MCF 10A (cell line): ENCODE measurements at regions of chr6 and their contacts with region 1.

Region 1: GRCh38 chr6:56637640-56638039 is 5.0 kb downstream of the DST start:
- DNase-seq: peak; percentile 77
- H3K4me3 Mint-ChIP-seq: peak overlapping the region; percentile 88
- H3K27ac Mint-ChIP-seq: peak overlapping the region; percentile 97
- H3K4me1 Mint-ChIP-seq: peaks cover 35% of the 10 kb centered on the region
- H3K27me3 Mint-ChIP-seq: no peaks in the 10 kb centered on the region
- CTCF ChIP-seq: peak; percentile 48

Region 2: DNA sequence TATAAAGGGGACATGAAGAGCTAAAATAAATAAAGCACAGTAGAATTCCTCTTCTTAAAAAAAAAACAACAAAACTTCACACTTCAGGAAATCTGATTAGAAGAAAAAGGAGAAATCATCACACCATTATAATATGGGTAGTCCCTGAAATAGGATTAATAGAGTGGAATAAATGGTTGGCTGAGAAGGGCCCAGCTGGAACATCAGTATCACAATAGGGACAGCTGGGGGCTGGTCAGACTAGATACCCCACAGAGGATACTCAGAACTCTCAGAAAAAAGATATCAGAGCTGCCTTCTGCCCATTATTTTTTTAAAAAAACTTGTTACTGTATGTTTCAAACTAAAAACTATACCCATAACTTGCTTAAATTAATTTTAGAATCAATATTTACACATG is 70.1 kb before region 1 on chr6:
- CTCF ChIA-PET with region 1: no interaction called
- POLR2A ChIA-PET with region 1: no interaction called
- intact Hi-C with region 1: no loop called
- DNase-seq: no peak
- H3K4me3 Mint-ChIP-seq: no peak overlapping the region
- H3K27ac Mint-ChIP-seq: no peak overlapping the region
- H3K4me1 Mint-ChIP-seq: no peaks in the 10 kb centered on the region
- H3K27me3 Mint-ChIP-seq: no peaks in the 10 kb centered on the region
- CTCF ChIP-seq: no peak

Region 3: GRCh38 chr6:56618050-56618449 is 19.6 kb before region 1 on chr6:
- CTCF ChIA-PET with region 1: interaction called, 4 read pairs
- POLR2A ChIA-PET with region 1: interaction called, 1,548 read pairs
- intact Hi-C with region 1: no loop called
- DNase-seq: no peak
- H3K4me3 Mint-ChIP-seq: no peak overlapping the region
- H3K27ac Mint-ChIP-seq: no peak overlapping the region
- H3K4me1 Mint-ChIP-seq: no peaks in the 10 kb centered on the region
- H3K27me3 Mint-ChIP-seq: no peaks in the 10 kb centered on the region
- CTCF ChIP-seq: peak; percentile 14

Region 4: DNA sequence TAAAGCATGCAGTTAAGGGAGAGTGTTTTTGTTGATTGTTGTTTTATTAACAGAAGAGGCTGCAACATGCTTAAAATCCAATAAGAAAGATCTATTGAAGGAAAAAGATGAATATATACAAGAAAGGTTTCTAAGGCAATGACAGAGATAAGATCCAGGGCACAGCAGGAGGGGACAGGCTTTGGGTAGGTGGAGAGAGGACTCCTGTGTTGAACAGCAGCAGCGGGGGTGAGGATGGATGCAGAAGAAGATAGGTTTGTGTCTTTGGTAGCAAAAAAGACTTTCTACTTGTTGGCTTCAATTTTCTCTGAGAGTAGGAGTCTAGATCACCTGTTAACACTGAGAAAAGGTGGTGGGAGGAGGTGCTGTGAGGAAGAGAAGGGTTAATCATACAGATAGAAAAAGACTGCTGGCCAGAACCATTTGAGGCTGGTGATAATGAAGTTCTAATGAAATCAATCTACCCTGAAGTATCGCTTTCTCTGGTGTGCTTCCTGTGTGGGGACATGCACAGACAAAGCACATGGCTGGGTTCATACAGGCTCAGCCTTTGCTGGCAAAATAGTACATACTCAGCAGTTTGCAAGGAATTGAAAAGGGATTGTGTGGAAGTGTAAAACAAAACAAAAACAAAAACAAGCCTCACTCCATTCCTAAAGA is 22.2 kb after region 1 on chr6:
- CTCF ChIA-PET with region 1: interaction called, 15 read pairs
- POLR2A ChIA-PET with region 1: interaction called, 1,548 read pairs
- intact Hi-C with region 1: loop called (anchors 2 kb)
- DNase-seq: peak; percentile 42
- H3K4me3 Mint-ChIP-seq: peak overlapping the region; percentile 2
- H3K27ac Mint-ChIP-seq: peak overlapping the region; percentile 95
- H3K4me1 Mint-ChIP-seq: peaks cover 61% of the 10 kb centered on the region
- H3K27me3 Mint-ChIP-seq: no peaks in the 10 kb centered on the region
- CTCF ChIP-seq: no peak

Region 5: DNA sequence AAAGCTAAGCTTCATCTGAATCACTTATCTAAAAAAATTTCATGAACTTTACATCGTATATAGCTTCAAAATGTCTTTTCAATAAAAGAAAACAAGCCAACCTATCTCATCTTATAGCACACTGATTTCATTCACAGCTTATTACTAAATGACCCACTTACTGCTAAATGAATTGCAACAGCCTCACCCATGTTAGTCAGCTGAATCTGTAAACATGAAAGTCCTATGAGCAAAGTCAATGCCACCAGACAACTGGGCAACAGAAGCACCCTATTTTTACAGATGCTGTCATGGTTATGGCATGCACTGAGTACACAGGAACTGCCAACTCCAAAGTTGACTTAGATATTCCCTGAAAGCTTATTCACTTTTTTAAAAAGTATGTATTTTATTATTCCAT is 46.2 kb after region 1 on chr6:
- CTCF ChIA-PET with region 1: interaction called, 3 read pairs
- POLR2A ChIA-PET with region 1: interaction called, 219 read pairs
- intact Hi-C with region 1: no loop called
- DNase-seq: peak; percentile 80
- H3K4me3 Mint-ChIP-seq: peak overlapping the region; percentile 20
- H3K27ac Mint-ChIP-seq: peak overlapping the region; percentile 87
- H3K4me1 Mint-ChIP-seq: peaks cover 16% of the 10 kb centered on the region
- H3K27me3 Mint-ChIP-seq: no peaks in the 10 kb centered on the region
- CTCF ChIP-seq: no peak

Region 6: DNA sequence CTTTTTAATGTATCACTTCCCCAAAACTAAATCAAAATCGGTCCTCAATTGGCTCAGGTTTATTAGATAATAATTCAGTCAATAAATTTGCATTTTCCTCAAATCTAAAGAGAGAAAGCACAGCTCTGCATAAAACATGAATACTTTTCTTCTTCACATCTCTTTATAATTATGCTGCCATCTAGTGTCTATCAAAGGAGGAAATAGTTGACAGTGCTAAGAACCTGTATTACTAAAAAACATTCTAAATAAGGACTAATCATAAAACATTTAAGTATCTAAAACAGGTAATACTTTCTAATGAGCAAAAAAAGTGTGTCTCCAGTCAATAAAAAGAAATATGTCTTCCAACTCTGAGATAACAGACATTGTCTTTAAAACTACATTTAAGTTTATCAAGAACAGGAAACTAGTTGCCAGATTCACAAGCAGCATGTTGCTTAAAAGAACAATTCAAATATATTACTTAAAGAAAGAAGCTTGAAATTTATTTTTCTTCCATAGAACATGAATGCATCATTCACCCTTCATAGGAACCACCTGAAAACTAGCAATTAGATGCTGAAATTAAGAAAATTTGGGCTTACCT is 61.5 kb after region 1 on chr6:
- CTCF ChIA-PET with region 1: interaction called, 11 read pairs
- POLR2A ChIA-PET with region 1: interaction called, 219 read pairs
- intact Hi-C with region 1: loop called (anchors 1 kb)
- DNase-seq: peak; percentile 46
- H3K4me3 Mint-ChIP-seq: no peak overlapping the region
- H3K27ac Mint-ChIP-seq: no peak overlapping the region
- H3K4me1 Mint-ChIP-seq: peaks cover 16% of the 10 kb centered on the region
- H3K27me3 Mint-ChIP-seq: no peaks in the 10 kb centered on the region
- CTCF ChIP-seq: peak; percentile 37

Region 7: DNA sequence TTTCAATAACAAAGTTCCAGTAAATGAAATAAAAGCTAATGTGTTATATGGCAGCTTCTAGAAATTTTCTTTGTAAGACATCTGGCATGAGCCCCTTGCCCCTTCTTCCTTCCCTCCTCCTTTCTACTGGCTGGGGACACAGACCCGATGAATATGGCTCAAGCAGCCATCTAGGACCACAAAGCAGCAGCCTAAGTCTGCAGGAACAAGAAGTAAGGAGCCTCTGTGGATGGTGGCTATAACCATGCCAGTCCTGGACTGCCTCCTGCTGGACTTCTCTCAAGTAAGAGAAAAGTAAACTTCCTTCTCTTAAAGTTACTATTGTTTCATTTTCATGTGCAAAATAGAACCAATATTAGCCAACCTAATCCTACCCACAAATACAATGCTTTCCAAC is 119.9 kb after region 1 on chr6:
- CTCF ChIA-PET with region 1: interaction called, 6 read pairs
- POLR2A ChIA-PET with region 1: interaction called, 17 read pairs
- intact Hi-C with region 1: loop called (anchors 2 kb)
- DNase-seq: peak; percentile 69
- H3K4me3 Mint-ChIP-seq: no peak overlapping the region
- H3K27ac Mint-ChIP-seq: no peak overlapping the region
- H3K4me1 Mint-ChIP-seq: peaks cover 21% of the 10 kb centered on the region
- H3K27me3 Mint-ChIP-seq: no peaks in the 10 kb centered on the region
- CTCF ChIP-seq: peak; percentile 66

Region 8: GRCh38 chr6:56851541-56852259 is 214.1 kb after region 1 on chr6:
- CTCF ChIA-PET with region 1: interaction called, 5 read pairs
- POLR2A ChIA-PET with region 1: interaction called, 6 read pairs
- intact Hi-C with region 1: loop called (anchors 2 kb)
- DNase-seq: peak; percentile 86
- H3K4me3 Mint-ChIP-seq: peak overlapping the region; percentile 81
- H3K27ac Mint-ChIP-seq: peak overlapping the region; percentile 56
- H3K4me1 Mint-ChIP-seq: peaks cover 35% of the 10 kb centered on the region
- H3K27me3 Mint-ChIP-seq: no peaks in the 10 kb centered on the region
- CTCF ChIP-seq: peak; percentile 57